MCF 10A (cell line): ENCODE measurements at regions of chr15 and their contacts with region 1.

Region 1: GRCh38 chr15:72222259-72222832 is 8.6 kb downstream of the PKM start:
- DNase-seq: peak; percentile 98
- H3K4me3 Mint-ChIP-seq: peak overlapping the region; percentile 67
- H3K27ac Mint-ChIP-seq: peak overlapping the region; percentile 71
- H3K4me1 Mint-ChIP-seq: peaks cover 58% of the 10 kb centered on the region
- H3K27me3 Mint-ChIP-seq: no peaks in the 10 kb centered on the region
- CTCF ChIP-seq: no peak

Region 2: GRCh38 chr15:72037321-72037720 is 185.0 kb before region 1 on chr15:
- CTCF ChIA-PET with region 1: no interaction called
- POLR2A ChIA-PET with region 1: no interaction called
- intact Hi-C with region 1: no loop called
- DNase-seq: no peak
- H3K4me3 Mint-ChIP-seq: no peak overlapping the region
- H3K27ac Mint-ChIP-seq: no peak overlapping the region
- H3K4me1 Mint-ChIP-seq: peaks cover 6% of the 10 kb centered on the region
- H3K27me3 Mint-ChIP-seq: no peaks in the 10 kb centered on the region
- CTCF ChIP-seq: no peak

Region 3: GRCh38 chr15:72206677-72207000 is 15.7 kb before region 1 on chr15:
- CTCF ChIA-PET with region 1: interaction called, 29 read pairs
- POLR2A ChIA-PET with region 1: interaction called, 424 read pairs
- intact Hi-C with region 1: no loop called
- DNase-seq: no peak
- H3K4me3 Mint-ChIP-seq: no peak overlapping the region
- H3K27ac Mint-ChIP-seq: no peak overlapping the region
- H3K4me1 Mint-ChIP-seq: peaks cover 23% of the 10 kb centered on the region
- H3K27me3 Mint-ChIP-seq: no peaks in the 10 kb centered on the region
- CTCF ChIP-seq: no peak

Region 4: DNA sequence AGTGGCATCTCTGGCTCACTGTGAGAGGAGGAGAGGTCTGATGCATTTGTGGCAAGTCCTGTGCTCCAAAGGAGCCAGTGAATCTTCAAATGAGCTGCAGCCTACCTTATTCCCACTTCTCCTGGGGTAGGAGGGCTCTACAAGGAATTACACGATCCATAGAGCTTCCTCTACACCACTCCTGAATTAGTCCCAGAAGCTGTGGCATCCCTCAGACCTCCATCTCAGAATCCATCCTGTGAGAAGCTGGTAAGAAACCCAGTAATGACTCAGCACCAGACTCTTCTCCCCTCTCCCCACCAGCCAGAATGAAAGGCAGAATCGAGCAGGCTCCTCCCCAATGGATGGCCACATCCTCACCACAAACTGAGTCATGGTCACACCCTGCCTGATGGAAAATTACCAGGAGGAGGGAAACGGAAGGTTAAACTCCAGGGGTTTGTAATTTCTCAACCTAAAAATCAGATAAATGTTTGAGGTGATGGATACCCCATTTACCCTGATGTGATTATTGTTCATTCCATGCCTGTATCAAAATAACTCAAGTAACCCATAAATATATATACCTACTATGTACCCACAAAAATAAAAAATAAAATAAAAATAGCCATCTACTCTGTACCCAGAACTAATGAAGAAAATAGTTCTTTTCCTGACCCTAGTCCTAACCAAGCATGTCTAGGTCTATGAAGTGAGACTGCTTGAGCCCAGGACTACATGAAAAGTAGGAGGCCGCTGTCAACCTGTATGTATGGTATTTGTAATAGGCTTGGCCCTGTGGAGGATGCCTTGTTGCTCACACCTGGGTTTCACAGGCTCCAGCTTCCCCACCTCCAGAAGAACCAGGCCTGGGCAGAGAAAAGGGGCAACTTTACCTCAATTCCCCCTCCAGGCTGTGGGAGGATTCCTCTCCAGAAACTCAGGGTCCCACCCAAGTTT is 15.2 kb after region 1 on chr15:
- CTCF ChIA-PET with region 1: interaction called, 4 read pairs
- POLR2A ChIA-PET with region 1: interaction called, 146 read pairs
- intact Hi-C with region 1: loop called (anchors 1 kb)
- DNase-seq: peak; percentile 99
- H3K4me3 Mint-ChIP-seq: peak overlapping the region; percentile 61
- H3K27ac Mint-ChIP-seq: peak overlapping the region; percentile 89
- H3K4me1 Mint-ChIP-seq: peaks cover 18% of the 10 kb centered on the region
- H3K27me3 Mint-ChIP-seq: no peaks in the 10 kb centered on the region
- CTCF ChIP-seq: no peak